PC-3 (cell line): ENCODE measurements at regions of chr6 and their contacts with region 1.

Region 1: GRCh38 chr6:122530440-122531046 is 58.9 kb upstream of the SERINC1 start:
- DNase-seq: peak; percentile 82
- ATAC-seq: peak; percentile 82
- H3K4me3 ChIP-seq: no peak overlapping the region
- H3K27ac ChIP-seq: no peak overlapping the region
- H3K4me1 ChIP-seq: no peaks in the 10 kb centered on the region
- H3K27me3 ChIP-seq: no peaks in the 10 kb centered on the region
- CTCF ChIP-seq: peak; percentile 81

Region 2: GRCh38 chr6:122381497-122382265 is 148.9 kb before region 1 on chr6:
- CTCF ChIA-PET with region 1: no interaction called
- POLR2A ChIA-PET with region 1: no interaction called
- intact Hi-C with region 1: loop called (anchors 5 kb)
- DNase-seq: peak; percentile 54
- ATAC-seq: peak; percentile 71
- H3K4me3 ChIP-seq: no peak overlapping the region
- H3K27ac ChIP-seq: no peak overlapping the region
- H3K4me1 ChIP-seq: no peaks in the 10 kb centered on the region
- H3K27me3 ChIP-seq: peaks cover 6% of the 10 kb centered on the region
- CTCF ChIP-seq: peak; percentile 67

Region 3: GRCh38 chr6:122471107-122472021 is 59.2 kb before region 1 on chr6 and contains the start of gene SERINC1:
- CTCF ChIA-PET with region 1: interaction called, 3 read pairs
- POLR2A ChIA-PET with region 1: no interaction called
- intact Hi-C with region 1: loop called (anchors 5 kb)
- DNase-seq: peak; percentile 90
- ATAC-seq: peak; percentile 89
- H3K4me3 ChIP-seq: peak within 1 kb of the TSS; percentile 91
- H3K27ac ChIP-seq: peak within 1 kb of the TSS; percentile 43
- H3K4me1 ChIP-seq: no peaks in the 10 kb centered on the region
- H3K27me3 ChIP-seq: no peaks in the 10 kb centered on the region
- CTCF ChIP-seq: no peak
- total RNA-seq, gene SERINC1: 27.8 and 31.7 TPM in 2 replicates

Region 4: DNA sequence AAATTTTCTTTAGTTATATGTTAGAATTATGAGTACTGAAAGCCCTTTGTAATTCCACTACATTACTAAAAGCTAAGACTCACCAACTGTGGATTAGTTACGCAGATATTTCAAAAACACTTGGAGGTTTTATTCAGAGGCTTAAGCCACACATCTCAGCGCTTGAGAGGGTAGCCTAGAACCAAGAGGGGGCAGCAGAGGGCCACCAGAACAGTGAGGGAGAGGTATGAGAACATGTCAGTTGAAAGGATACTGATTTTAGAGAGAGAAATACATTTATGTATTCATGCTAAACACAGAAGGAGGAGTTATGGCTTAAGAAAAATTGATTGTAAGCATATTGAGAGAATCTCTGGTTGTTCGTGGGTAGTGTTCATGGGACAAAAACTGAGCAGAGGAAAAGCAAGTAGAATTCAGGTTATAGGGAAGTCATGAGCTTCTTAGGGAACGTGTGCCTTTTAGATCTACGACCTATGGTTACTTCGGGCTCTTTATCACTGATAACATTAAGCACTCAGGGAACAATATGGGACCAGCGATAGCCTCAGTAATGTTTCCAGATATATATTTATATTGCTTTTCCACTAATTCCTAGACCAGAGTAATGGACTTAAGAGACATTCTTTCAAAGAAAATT is 38.5 kb before region 1 on chr6:
- CTCF ChIA-PET with region 1: interaction called, 26 read pairs
- POLR2A ChIA-PET with region 1: no interaction called
- intact Hi-C with region 1: loop called (anchors 1 kb)
- DNase-seq: peak; percentile 80
- ATAC-seq: peak; percentile 98
- H3K4me3 ChIP-seq: no peak overlapping the region
- H3K27ac ChIP-seq: no peak overlapping the region
- H3K4me1 ChIP-seq: peaks cover 15% of the 10 kb centered on the region
- H3K27me3 ChIP-seq: no peaks in the 10 kb centered on the region
- CTCF ChIP-seq: peak; percentile 93

Region 5: GRCh38 chr6:122520179-122520578 is 10.4 kb before region 1 on chr6:
- CTCF ChIA-PET with region 1: no interaction called
- POLR2A ChIA-PET with region 1: no interaction called
- intact Hi-C with region 1: no loop called
- DNase-seq: no peak
- ATAC-seq: no peak
- H3K4me3 ChIP-seq: no peak overlapping the region
- H3K27ac ChIP-seq: no peak overlapping the region
- H3K4me1 ChIP-seq: no peaks in the 10 kb centered on the region
- H3K27me3 ChIP-seq: no peaks in the 10 kb centered on the region
- CTCF ChIP-seq: no peak